Activated CD4-positive, alpha-beta memory T cell treated with anti-CD3 and anti-CD28 coated beads for 36 hours (primary cell): ENCODE measurements at regions of chr2 and their contacts with region 1.

Region 1: DNA sequence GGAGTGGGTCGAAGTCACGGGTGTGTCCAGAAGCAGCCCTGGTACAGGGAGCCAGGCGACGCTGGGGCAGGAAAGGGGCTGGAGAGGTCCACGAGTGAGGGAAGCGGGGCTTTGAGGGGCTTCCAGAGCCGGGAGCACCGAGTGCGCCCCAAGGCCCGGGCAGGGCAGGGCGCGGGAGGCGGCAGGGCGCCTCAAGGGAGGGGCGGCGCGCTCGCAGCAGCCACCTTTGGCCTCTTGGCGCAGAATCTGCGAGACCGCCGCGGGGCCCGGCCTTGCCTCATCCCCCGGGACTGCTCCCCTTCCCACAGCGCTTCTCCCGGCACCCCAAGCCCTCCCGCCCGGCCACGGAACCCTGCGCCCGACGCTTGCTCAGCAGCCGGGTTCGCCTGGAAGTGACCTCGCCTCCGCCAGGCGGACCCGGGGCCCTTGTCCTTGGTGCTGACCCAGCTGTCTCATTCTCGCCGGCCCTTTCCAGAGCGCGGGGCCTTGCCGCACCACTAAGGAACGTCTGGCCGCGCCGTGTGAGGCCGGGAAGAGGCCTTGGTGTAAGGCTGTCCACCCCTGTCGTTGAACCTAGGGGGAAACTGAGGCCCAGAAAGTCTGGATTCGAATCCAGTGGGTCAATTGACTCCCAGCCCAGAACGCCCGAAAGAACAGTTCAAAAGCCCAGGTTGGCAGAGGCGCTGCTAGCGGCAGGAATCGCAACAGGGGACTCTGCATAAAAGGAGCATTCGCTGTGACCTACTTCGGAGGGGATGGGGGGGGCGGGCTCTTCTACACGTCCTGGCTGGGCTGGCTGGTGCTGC is 584 bp upstream of the DNER start:
- DNase-seq: peak; percentile 61
- H3K4me3 Mint-ChIP-seq: peak overlapping the region; percentile 43
- H3K27ac Mint-ChIP-seq: no peak overlapping the region
- H3K4me1 Mint-ChIP-seq: peaks cover 13% of the 10 kb centered on the region
- H3K27me3 Mint-ChIP-seq: peaks cover 58% of the 10 kb centered on the region

Region 2: DNA sequence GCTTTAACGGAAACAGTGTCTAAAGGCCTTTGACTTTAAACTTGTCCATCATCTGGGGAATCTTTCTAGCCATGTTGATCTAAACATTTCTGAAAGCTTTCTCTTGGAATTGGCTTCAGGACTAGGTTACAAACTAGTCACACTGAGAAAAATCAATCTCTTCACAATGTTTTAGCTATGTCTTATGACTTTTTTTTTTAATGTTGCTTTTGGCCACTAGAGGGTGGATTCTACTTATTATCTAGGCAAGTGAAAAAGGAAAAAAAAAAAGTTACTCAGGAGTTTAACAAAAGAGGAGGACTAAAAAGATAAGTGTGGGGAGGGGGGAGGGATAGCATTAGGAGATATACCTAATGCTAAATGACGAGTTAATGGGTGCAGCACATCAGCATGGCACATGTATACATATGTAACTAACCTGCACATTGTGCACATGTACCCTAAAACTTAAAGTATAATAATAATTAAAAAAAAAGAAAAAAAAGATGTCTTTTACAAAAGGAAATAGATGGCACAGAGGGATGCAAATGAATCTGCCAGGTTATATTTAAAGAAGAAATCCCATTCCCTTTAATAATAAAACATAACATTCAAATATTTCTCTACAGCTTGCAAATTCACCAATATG is 283.5 kb before region 1 on chr2:
- CTCF ChIA-PET with region 1: no interaction called
- POLR2A ChIA-PET with region 1: no interaction called
- intact Hi-C with region 1: loop called (anchors 5 kb)
- DNase-seq: no peak
- H3K4me3 Mint-ChIP-seq: no peak overlapping the region
- H3K27ac Mint-ChIP-seq: no peak overlapping the region
- H3K4me1 Mint-ChIP-seq: no peaks in the 10 kb centered on the region
- H3K27me3 Mint-ChIP-seq: peaks cover 2% of the 10 kb centered on the region

Region 3: DNA sequence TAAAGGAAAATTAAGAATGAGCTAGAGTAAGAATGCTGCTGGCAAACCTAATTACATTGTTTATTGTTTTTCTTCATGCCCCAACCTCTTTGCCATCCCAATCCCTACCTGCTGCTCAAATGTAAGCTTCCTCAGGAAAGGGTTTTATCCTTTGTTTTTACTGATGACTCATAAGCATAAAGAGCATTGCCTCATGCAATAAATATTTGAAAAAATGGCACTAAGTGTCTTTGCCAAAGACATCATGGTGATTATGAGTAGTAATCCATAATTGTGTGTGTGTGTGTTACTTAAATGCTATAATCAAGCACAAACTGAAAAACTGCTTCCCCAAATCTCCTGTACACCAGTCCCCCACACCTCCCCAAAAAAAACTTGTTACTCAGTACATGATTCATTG is 54.0 kb before region 1 on chr2:
- CTCF ChIA-PET with region 1: no interaction called
- POLR2A ChIA-PET with region 1: no interaction called
- intact Hi-C with region 1: no loop called
- DNase-seq: no peak
- H3K4me3 Mint-ChIP-seq: no peak overlapping the region
- H3K27ac Mint-ChIP-seq: no peak overlapping the region
- H3K4me1 Mint-ChIP-seq: no peaks in the 10 kb centered on the region
- H3K27me3 Mint-ChIP-seq: peaks cover 3% of the 10 kb centered on the region